ENCODE measurements at regions of chr6 and their contacts with region 1.

Region 1: GRCh38 chr6:10659699-10660348 is 34.6 kb downstream of the C6orf52 start:
- DNase-seq: no peak
- ATAC-seq: no peak
- H3K4me3 ChIP-seq: peak overlapping the region in 1 of 2 experiments; percentile 25; a peak in 1 of 4 replicates
- H3K27ac ChIP-seq: no peak overlapping the region
- H3K4me1 ChIP-seq: no peaks in the 10 kb centered on the region
- H3K27me3 ChIP-seq: no peaks in the 10 kb centered on the region; the same call in 1 of the 2 replicates
- CTCF ChIP-seq: no peak

Region 2: GRCh38 chr6:9583753-9584352 is 1076.0 kb before region 1 on chr6:
- CTCF ChIA-PET with region 1: no interaction called
- POLR2A ChIA-PET with region 1: interaction called, 11 read pairs
- in situ Hi-C with region 1: no loop called
- intact Hi-C with region 1: no loop called
- DNase-seq: no peak
- ATAC-seq: no peak
- H3K4me3 ChIP-seq: no peak overlapping the region
- H3K27ac ChIP-seq: no peak overlapping the region; the same call in 1 of the 2 replicates
- H3K4me1 ChIP-seq: no peaks in the 10 kb centered on the region; the same call in 1 of the 2 replicates
- H3K27me3 ChIP-seq: no peaks in the 10 kb centered on the region
- CTCF ChIP-seq: no peak

Region 3: DNA sequence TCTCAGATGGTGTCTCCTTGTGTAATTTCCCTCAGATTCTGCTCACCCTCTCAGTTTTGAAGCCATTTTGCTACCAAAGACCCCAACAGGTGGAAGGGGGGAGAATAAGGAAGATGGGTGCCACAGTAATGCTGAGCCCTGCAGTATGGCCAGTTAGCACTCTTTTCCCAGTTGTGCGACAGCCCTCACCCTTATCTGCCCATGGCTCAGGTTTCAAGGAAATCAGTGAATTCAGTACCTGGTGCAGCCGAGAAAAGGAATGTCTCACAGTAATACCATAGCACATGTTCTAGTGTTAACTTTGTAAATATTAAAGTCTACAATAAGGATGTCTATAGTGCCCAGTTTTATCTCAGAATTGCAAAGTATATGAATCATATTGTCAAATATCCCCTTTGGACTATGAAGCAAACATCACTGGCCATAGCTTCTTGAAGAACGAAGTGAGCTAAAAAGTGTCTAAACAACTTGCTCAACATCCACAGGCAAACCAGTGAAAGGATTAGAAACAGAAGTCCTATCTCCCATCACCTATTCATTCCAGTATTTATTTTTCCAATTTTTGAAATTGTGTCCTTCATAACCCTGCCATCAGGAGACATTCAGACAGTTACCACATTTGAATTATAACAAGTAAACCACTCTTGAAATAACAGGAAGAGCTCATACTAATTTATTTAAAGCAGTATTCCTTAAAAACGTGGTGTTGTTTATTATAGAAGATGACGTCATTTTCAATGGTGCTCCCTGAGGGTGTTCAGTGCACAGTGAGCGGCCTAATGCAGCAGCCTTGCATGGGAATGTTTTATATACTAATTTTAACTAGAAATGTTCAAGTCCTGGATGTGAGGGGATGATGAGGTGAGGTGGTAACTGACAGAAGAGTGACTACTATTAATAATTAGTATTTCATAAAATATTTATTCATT is 611.2 kb before region 1 on chr6:
- CTCF ChIA-PET with region 1: no interaction called
- POLR2A ChIA-PET with region 1: no interaction called
- in situ Hi-C with region 1: no loop called
- intact Hi-C with region 1: no loop called
- DNase-seq: no peak
- ATAC-seq: no peak
- H3K4me3 ChIP-seq: no peak overlapping the region
- H3K27ac ChIP-seq: no peak overlapping the region; the same call in 1 of the 2 replicates
- H3K4me1 ChIP-seq: no peaks in the 10 kb centered on the region
- H3K27me3 ChIP-seq: no peaks in the 10 kb centered on the region
- CTCF ChIP-seq: no peak